GM13977 (cell line): ENCODE measurements at regions of chr22 and their contacts with region 1.

Region 1: GRCh38 chr22:28600546-28601143 is 79.0 kb downstream of the TTC28 start:
- DNase-seq: peak; percentile 40
- CTCF ChIP-seq: peak; percentile 42

Region 2: DNA sequence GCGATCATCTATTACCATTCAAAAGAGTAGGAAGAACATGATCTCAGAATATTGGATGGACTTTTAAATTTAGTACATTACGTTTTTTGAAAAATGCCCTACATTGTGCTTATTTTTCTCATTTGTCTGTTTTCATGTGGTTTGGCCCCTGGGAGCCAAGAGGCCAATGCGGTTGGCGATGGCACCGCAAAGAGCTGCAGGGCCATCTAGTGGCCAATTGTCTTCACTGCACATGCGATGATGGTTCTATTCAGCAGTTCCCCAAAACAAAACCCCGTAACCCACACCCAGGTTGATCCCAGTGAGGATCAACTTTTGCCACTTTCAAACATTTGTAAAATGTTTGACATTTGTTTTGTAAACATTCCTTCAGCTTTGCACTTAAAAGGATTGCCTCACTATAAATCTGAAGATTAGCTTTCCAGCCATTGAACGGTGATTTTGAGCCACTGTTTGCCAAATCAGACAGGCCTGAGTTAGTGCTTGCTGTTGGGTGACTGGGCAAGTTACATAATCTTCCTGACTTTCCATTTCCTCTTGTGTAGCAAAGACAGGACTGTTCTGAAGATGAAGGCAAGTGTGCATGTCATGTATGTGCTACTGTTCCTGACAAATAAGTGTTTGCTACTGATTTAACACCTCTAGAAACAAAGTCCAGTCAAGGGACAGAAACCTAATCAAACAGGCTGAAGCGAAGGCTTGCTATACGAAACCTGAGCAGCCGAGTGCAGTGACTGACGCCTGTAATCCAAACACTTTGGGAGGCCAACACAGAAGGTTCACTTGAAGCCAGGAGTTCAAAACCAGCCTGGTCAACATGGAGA is 228.9 kb after region 1 on chr22:
- in situ Hi-C with region 1: loop called (anchors 10 kb)
- DNase-seq: peak; percentile 79
- CTCF ChIP-seq: peak; percentile 94